CD4-positive, alpha-beta memory T cell (primary cell): ENCODE measurements at regions of chr21 and their contacts with region 1.

Region 1: DNA sequence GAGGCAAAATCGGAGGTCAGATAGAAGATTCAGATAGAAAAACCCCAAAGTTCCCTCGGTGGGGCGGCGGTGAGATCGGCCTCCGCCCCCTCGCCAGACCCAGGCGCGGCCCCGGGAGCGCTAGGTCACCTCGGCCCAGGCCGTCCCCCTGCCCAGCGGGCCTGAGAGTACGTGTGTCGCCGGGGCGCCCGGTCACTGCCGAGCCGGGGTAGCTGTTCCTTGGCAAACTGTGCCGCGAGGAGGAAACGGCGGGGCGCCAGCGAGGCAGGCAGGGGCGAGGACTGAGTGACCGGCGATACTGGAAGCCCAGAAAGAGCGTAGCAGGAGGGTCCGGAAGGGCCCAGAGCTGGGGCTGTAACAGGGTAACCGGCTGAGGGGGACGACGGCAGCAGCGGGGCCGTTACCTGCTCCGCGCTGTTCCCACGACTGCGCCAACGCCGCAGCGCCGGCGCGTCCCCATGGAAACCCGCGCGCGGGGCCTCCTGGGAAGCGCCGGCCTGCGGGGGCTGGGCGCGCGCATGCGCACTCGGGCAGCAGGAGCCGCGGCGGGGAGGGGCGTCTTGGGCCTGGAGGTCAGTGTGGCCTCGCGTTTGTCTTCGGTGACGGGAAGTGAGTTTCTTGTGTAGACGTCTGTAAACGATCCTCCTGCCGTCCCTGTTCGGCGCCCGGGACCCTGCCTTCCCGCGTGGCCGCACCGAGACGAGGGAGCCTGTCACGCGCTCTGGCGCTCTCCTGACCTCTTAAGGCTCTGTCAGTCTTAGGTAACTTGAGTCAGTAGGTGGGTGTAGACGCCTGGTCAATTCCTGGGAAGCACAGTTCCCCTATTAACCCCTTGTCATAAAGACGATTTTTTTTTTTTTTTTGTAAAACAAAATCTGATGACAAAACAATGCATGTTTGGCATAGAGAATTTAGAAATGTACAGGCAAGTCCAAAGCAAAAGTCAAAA is at the start of gene LCA5L:
- DNase-seq: peak; percentile 86 to 91 (median 89)
- H3K4me3 ChIP-seq: peak within 1 kb of the TSS; percentile 69 to 75
- H3K4me3 Mint-ChIP-seq: peak within 1 kb of the TSS; percentile 90 to 99 (median 96)
- H3K27ac ChIP-seq: peak within 1 kb of the TSS; percentile 72
- H3K27ac Mint-ChIP-seq: peak within 1 kb of the TSS; percentile 92 to 98 (median 96)
- H3K4me1 ChIP-seq: peaks cover 13% of the 10 kb centered on the region
- H3K4me1 Mint-ChIP-seq: peaks cover 12 to 19% (median 15%) of the 10 kb centered on the region in 4 donors
- H3K27me3 ChIP-seq: no peaks in the 10 kb centered on the region
- H3K27me3 Mint-ChIP-seq: peaks cover 4 to 5% of the 10 kb centered on the region in 2 donors
- total RNA-seq, gene LCA5L: not detected

Region 2: DNA sequence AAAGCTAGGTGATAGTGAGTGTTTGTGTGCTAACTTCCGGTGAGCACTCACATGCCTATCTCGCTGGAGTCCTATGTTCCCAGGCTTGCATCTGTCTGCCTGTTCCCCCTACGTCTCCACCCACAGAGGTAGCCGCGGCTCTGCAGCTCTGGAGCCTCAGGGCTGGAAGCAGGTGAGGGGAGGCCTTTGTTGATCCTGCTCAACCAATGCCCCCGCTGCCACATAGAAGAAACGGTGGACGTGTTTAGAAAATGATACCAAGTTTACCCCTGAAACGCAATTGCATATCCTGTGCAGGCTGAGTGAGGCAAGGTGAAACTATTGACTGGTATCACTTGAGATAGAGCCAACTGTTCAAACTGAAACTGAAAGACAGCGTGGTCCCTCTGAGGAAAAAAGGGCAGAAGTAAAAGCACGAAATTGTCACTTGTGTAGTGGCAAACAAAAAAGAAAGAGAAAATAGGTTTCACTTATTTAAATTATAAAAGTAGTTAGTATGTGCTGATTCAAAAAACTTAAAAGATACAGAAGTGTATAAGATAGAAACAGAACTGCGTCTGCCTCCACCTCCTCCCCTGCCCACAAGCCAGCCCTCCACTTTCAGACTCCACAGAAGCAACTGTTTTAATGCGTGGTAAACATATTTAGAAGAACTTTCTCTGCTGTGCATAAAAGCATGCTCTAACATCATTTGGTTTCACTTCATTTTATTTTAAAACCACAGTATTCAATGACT is 678.4 kb before region 1 on chr21:
- CTCF ChIA-PET with region 1: no interaction called
- POLR2A ChIA-PET with region 1: no interaction called
- intact Hi-C with region 1: loop called (anchors 10 kb)
- DNase-seq: peak; percentile 69 to 80 (median 74)
- H3K4me3 ChIP-seq: peak overlapping the region; percentile 63 to 71
- H3K4me3 Mint-ChIP-seq: peak overlapping the region; percentile 85 to 96 (median 92)
- H3K27ac ChIP-seq: peak overlapping the region; percentile 72
- H3K27ac Mint-ChIP-seq: peak overlapping the region; percentile 86 to 96 (median 91)
- H3K4me1 ChIP-seq: peaks cover 27% of the 10 kb centered on the region
- H3K4me1 Mint-ChIP-seq: peaks cover 22 to 35% (median 31%) of the 10 kb centered on the region in 4 donors
- H3K27me3 ChIP-seq: no peaks in the 10 kb centered on the region
- H3K27me3 Mint-ChIP-seq: no peaks in the 10 kb centered on the region

Region 3: GRCh38 chr21:39183237-39184007 is 262.2 kb before region 1 on chr21 and contains the start of gene PSMG1:
- CTCF ChIA-PET with region 1: no interaction called
- POLR2A ChIA-PET with region 1: interaction called, 5 read pairs
- intact Hi-C with region 1: loop called (anchors 1 kb)
- DNase-seq: peak; percentile 92 to 94 (median 93)
- H3K4me3 ChIP-seq: peak within 1 kb of the TSS; percentile 79 to 85
- H3K4me3 Mint-ChIP-seq: peak within 1 kb of the TSS; percentile 95 to 100 (median 98)
- H3K27ac ChIP-seq: peak within 1 kb of the TSS; percentile 84
- H3K27ac Mint-ChIP-seq: peak within 1 kb of the TSS; percentile 95 to 98 (median 97)
- H3K4me1 ChIP-seq: peaks cover 30% of the 10 kb centered on the region
- H3K4me1 Mint-ChIP-seq: peaks cover 34 to 79% (median 48%) of the 10 kb centered on the region in 4 donors
- H3K27me3 ChIP-seq: no peaks in the 10 kb centered on the region
- H3K27me3 Mint-ChIP-seq: no peaks in the 10 kb centered on the region
- total RNA-seq, gene PSMG1: 17.2 to 19.9 TPM

Region 4: DNA sequence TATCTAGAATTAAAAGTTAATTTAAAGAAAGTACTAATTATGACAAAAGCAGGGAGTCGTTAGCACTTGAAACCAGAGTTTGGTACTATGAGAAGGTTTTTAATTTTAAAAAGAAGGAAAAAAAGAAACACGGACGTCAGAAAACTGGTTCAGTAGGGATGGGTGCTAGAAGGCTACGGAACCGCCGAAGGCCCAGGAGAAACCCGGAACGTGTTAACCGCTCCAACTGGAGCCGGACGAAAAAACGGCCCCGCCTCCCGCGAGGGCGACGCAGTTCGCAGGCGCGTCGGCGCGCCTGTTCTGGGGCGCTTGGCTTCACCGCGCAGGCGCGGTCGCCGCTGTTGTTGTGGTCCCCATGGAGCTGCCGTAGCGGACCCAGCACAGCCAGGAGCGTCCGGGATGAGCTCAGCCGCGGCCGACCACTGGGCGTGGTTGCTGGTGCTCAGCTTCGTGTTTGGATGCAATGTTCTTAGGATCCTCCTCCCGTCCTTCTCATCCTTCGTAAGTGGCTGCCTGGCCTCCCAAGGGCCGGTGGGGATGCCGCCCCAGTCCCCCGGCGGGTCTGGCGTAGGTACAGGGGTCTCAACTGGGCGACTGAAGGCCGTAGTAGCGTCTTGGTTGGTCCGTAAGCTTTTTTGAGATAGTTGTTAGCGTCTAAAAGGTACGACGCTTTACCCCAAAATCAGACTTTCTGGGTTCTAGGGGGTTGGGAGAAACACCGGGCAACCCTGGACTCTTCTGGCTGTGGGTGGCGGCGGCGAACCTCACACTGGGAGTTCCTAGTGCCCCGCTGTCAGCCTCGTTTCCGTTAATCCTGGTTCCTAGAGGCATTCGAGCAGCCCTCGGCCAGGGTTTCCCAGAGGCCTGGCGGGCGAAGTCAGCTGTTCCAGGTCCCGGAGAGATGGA is 65.4 kb before region 1 on chr21:
- CTCF ChIA-PET with region 1: no interaction called
- POLR2A ChIA-PET with region 1: no interaction called
- intact Hi-C with region 1: loop called (anchors 2 kb)
- DNase-seq: peak; percentile 85 to 92 (median 88)
- H3K4me3 ChIP-seq: peak overlapping the region; percentile 70 to 99
- H3K4me3 Mint-ChIP-seq: peak overlapping the region; percentile 91 to 97 (median 94)
- H3K27ac ChIP-seq: peak overlapping the region; percentile 81
- H3K27ac Mint-ChIP-seq: peak overlapping the region; percentile 91 to 97 (median 93)
- H3K4me1 ChIP-seq: peaks cover 23% of the 10 kb centered on the region
- H3K4me1 Mint-ChIP-seq: peaks cover 13 to 34% (median 26%) of the 10 kb centered on the region in 4 donors
- H3K27me3 ChIP-seq: no peaks in the 10 kb centered on the region
- H3K27me3 Mint-ChIP-seq: peaks cover under 1 to 3% of the 10 kb centered on the region in 2 donors

Region 5: DNA sequence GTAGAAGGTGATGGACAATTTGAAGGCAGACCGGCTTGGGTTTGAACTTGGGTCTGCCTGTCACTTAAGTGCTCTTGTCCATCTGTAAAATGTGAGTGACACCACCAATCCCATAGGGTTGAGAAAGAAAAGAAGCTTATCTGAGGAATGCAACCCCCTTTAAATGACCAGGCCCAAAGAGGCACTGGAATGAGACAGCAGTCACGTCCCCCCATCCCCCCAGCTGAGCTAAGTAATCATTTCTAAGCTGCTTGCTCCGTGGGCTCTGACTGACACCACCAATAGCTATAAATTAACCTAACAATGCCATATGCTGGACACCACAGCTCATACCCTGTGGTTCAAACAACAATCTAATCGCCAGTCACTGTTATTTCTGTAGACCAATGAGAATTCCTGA is 15.1 kb before region 1 on chr21:
- CTCF ChIA-PET with region 1: interaction called, 12 read pairs
- POLR2A ChIA-PET with region 1: no interaction called
- intact Hi-C with region 1: no loop called
- DNase-seq: no peak
- H3K4me3 ChIP-seq: no peak overlapping the region
- H3K4me3 Mint-ChIP-seq: no peak overlapping the region
- H3K27ac ChIP-seq: no peak overlapping the region
- H3K27ac Mint-ChIP-seq: no peak overlapping the region
- H3K4me1 ChIP-seq: no peaks in the 10 kb centered on the region
- H3K4me1 Mint-ChIP-seq: no peaks in the 10 kb centered on the region
- H3K27me3 ChIP-seq: no peaks in the 10 kb centered on the region
- H3K27me3 Mint-ChIP-seq: peaks cover 4 to 10% of the 10 kb centered on the region in 2 donors

Region 6: DNA sequence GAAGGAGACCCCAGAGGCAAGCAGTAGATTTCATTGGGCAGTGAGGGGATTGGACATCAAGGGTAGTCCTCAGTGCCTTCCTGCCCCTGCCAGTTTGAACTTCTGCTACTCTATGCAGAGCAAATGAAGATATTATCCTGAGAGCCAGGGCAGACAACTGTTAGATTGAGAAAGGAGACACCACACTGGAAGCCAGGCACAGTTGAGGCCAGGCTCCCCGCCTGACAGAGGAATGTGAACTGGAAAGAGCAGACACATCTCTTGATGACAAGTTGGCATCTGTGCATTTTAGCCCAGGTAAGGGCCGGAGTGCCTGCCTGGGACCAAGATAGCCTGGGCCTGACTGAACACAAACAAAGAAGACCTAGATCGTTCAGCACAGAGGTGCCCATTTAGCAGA is 22.2 kb after region 1 on chr21:
- CTCF ChIA-PET with region 1: no interaction called
- POLR2A ChIA-PET with region 1: no interaction called
- intact Hi-C with region 1: no loop called
- DNase-seq: no peak
- H3K4me3 ChIP-seq: no peak overlapping the region
- H3K4me3 Mint-ChIP-seq: no peak overlapping the region
- H3K27ac ChIP-seq: no peak overlapping the region
- H3K27ac Mint-ChIP-seq: no peak overlapping the region
- H3K4me1 ChIP-seq: no peaks in the 10 kb centered on the region
- H3K4me1 Mint-ChIP-seq: no peaks in the 10 kb centered on the region
- H3K27me3 ChIP-seq: no peaks in the 10 kb centered on the region
- H3K27me3 Mint-ChIP-seq: no peaks in the 10 kb centered on the region